ENCODE measurements at regions of chr6 and their contacts with region 1.

Region 1: GRCh38 chr6:144284783-144285547 is at the start of gene UTRN:
- DNase-seq: peak; percentile 54
- H3K4me3 Mint-ChIP-seq: peak within 1 kb of the TSS; percentile 89
- H3K27ac Mint-ChIP-seq: peak within 1 kb of the TSS; percentile 71
- H3K4me1 Mint-ChIP-seq: peaks cover 21% of the 10 kb centered on the region
- H3K27me3 Mint-ChIP-seq: peaks cover 24% of the 10 kb centered on the region
- total RNA-seq, gene UTRN: 140 to 146 TPM

Region 2: GRCh38 chr6:144305985-144306384 is 21.0 kb after region 1 on chr6:
- CTCF ChIA-PET with region 1: interaction called, 3 read pairs
- POLR2A ChIA-PET with region 1: interaction called, 12 read pairs
- DNase-seq: peak; percentile 54
- H3K4me3 Mint-ChIP-seq: peak overlapping the region; percentile 46
- H3K27ac Mint-ChIP-seq: peak overlapping the region; percentile 83
- H3K4me1 Mint-ChIP-seq: peaks cover 37% of the 10 kb centered on the region
- H3K27me3 Mint-ChIP-seq: peaks cover 17% of the 10 kb centered on the region